ENCODE measurements at regions of chr16 and their contacts with region 1.

Region 1: DNA sequence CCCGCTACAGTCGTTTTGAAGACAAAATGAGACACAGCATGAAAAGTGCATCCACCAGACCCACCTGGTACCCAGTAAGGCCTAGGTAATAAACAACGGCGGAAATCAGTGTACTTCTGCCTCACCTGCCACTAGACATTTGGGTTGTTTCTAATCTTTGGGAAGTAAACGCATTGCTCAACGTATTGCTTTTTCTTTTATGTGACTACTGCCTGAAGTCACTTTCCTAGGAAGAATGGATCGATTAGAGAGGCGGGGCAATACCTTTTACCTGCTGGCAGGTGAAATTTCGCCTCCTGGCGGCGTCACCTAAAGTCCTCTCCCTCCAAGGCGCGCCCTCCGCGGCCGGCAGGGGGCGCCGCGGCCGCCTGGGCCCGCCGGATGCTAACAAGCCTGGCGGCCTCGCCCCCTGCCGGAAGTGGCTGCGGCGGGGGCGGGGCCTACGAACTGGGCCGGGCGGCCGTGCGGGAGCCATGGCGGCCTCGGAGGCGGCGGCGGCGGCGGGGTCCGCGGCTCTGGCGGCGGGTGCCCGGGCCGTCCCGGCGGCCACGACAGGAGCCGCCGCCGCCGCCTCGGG is at the start of gene ATMIN:
- DNase-seq: peak; percentile 77
- H3K4me3 ChIP-seq: peak within 1 kb of the TSS; percentile 61 to 69 (median 69)
- H3K27ac ChIP-seq: peak within 1 kb of the TSS; percentile 61
- H3K4me1 ChIP-seq: peaks cover 11% of the 10 kb centered on the region
- H3K27me3 ChIP-seq: no peaks in the 10 kb centered on the region
- CTCF ChIP-seq: peak; percentile 89 to 96
- POLR2A ChIP-seq: no peak
- total RNA-seq, gene ATMIN: 22.4 and 25.3 TPM in 2 replicates

Region 2: GRCh38 chr16:80997139-80997798 is 38.2 kb before region 1 on chr16:
- CTCF ChIA-PET with region 1: interaction called, 13 read pairs
- POLR2A ChIA-PET with region 1: no interaction called
- dilution Hi-C with region 1: no loop called
- intact Hi-C with region 1: no loop called
- DNase-seq: peak; percentile 54
- H3K4me3 ChIP-seq: peak overlapping the region; percentile 10 to 51 (median 10)
- H3K27ac ChIP-seq: peak overlapping the region; percentile 51
- H3K4me1 ChIP-seq: peaks cover 31% of the 10 kb centered on the region
- H3K27me3 ChIP-seq: no peaks in the 10 kb centered on the region
- CTCF ChIP-seq: no peak
- POLR2A ChIP-seq: no peak

Region 3: DNA sequence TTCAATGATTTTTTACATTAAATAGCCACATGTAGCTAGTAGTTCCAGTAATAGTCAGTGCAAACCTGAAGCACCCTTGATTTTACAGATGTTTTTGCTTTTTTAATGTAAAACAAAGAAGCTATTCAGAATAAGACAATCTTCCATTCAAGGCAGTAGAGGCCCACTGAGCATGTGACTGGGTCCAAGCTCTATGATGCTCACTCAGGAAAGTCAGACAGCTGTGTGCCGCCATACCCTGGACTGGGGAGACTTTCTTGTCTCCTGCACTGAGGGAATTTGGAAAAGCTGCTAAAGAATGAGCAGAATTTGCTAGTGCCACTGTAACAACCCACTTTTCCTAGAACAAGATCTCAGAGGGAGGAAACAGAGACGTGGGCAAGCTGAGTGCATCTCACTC is 17.0 kb before region 1 on chr16:
- CTCF ChIA-PET with region 1: interaction called, 15 read pairs
- POLR2A ChIA-PET with region 1: no interaction called
- dilution Hi-C with region 1: no loop called
- intact Hi-C with region 1: no loop called
- DNase-seq: no peak
- H3K4me3 ChIP-seq: no peak overlapping the region
- H3K27ac ChIP-seq: no peak overlapping the region
- H3K4me1 ChIP-seq: no peaks in the 10 kb centered on the region
- H3K27me3 ChIP-seq: no peaks in the 10 kb centered on the region
- CTCF ChIP-seq: no peak
- POLR2A ChIP-seq: no peak

Region 4: GRCh38 chr16:81095953-81096717 is 60.6 kb after region 1 on chr16 and contains the start of gene GCSH:
- CTCF ChIA-PET with region 1: interaction called, 9 read pairs
- POLR2A ChIA-PET with region 1: no interaction called
- dilution Hi-C with region 1: no loop called
- intact Hi-C with region 1: loop called (anchors 1 kb)
- DNase-seq: peak; percentile 99
- H3K4me3 ChIP-seq: peak within 1 kb of the TSS; percentile 49 to 80 (median 60)
- H3K27ac ChIP-seq: peak within 1 kb of the TSS; percentile 0
- H3K4me1 ChIP-seq: peaks cover 7% of the 10 kb centered on the region
- H3K27me3 ChIP-seq: peaks cover 0 to 4% of the 10 kb centered on the region in 2 experiments
- CTCF ChIP-seq: no peak
- POLR2A ChIP-seq: peak; percentile 57
- total RNA-seq, gene GCSH: 31.1 and 33.1 TPM in 2 replicates

Region 5: GRCh38 chr16:81737885-81738786 is 702.6 kb after region 1 on chr16:
- CTCF ChIA-PET with region 1: interaction called, 11 read pairs
- POLR2A ChIA-PET with region 1: no interaction called
- dilution Hi-C with region 1: no loop called
- intact Hi-C with region 1: loop called (anchors 1 kb)
- DNase-seq: peak; percentile 81
- H3K4me3 ChIP-seq: peak overlapping the region in 1 of 3 experiments; percentile 40
- H3K27ac ChIP-seq: no peak overlapping the region
- H3K4me1 ChIP-seq: peaks cover 4% of the 10 kb centered on the region
- H3K27me3 ChIP-seq: no peaks in the 10 kb centered on the region
- CTCF ChIP-seq: peak; percentile 77 to 83
- POLR2A ChIP-seq: no peak

Measured in endothelial cell of umbilical vein (primary cell).